Psoas muscle (tissue), 8 donors: ENCODE measurements at regions of chr7 and their contacts with region 1.

Region 1: DNA sequence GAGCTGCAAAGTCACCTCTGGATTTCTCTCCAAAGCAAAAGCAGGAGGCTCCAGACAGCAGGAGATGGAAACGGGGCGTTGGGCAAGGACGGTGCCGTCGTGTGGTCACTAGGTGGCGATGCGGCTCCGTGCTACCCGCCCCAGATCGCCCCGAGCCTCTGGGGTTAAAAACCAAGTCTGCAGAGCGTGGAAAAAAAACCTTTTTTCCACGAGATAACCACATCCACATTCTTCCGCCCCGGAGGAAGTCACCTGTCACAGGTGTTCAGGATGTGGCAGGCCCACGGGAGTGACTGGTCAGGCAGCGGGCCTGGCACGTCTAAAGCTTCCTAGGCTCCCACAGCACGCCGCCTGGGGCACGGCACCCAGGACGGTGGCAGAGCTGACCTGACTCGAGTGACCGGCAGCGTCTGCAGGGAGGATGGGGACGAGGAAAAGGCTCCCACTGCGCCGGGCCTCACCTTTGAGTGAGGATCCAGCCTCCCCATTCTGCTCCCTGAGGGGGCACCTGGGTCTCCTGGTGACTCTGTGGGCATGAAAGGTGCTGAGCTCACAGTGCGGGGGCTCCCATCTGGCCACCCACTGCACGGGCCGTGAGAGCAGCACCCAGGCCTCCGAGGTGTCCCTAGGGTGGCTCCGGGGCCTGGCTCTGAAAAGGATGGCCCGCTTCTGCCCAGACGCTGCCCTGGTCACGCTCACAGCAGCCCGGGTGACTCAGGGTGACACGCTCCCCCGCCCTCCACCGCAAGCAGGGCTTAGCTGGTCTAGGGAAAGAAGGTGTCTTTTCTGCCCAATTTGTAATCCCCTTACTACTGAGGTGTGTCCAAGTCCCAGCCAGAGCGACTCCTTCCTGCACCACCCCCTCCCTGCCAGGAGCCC is 71.3 kb upstream of the TNRC18 start:
- DNase-seq: peak; percentile 73 to 87
- ATAC-seq: peak; percentile 76 to 85 (median 80)
- H3K4me3 ChIP-seq: peak overlapping the region; percentile 37
- H3K27ac ChIP-seq: peak overlapping the region; percentile 85
- H3K4me1 ChIP-seq: peaks cover 28% of the 10 kb centered on the region
- H3K27me3 ChIP-seq: no peaks in the 10 kb centered on the region
- CTCF ChIP-seq: peak; percentile 97

Region 2: GRCh38 chr7:5559576-5559975 is 64.7 kb after region 1 on chr7:
- intact Hi-C with region 1: loop called (anchors 1 kb)
- DNase-seq: no peak
- ATAC-seq: no peak
- H3K4me3 ChIP-seq: no peak overlapping the region
- H3K27ac ChIP-seq: no peak overlapping the region
- H3K4me1 ChIP-seq: peaks cover 51% of the 10 kb centered on the region
- H3K27me3 ChIP-seq: no peaks in the 10 kb centered on the region
- CTCF ChIP-seq: no peak

Region 3: DNA sequence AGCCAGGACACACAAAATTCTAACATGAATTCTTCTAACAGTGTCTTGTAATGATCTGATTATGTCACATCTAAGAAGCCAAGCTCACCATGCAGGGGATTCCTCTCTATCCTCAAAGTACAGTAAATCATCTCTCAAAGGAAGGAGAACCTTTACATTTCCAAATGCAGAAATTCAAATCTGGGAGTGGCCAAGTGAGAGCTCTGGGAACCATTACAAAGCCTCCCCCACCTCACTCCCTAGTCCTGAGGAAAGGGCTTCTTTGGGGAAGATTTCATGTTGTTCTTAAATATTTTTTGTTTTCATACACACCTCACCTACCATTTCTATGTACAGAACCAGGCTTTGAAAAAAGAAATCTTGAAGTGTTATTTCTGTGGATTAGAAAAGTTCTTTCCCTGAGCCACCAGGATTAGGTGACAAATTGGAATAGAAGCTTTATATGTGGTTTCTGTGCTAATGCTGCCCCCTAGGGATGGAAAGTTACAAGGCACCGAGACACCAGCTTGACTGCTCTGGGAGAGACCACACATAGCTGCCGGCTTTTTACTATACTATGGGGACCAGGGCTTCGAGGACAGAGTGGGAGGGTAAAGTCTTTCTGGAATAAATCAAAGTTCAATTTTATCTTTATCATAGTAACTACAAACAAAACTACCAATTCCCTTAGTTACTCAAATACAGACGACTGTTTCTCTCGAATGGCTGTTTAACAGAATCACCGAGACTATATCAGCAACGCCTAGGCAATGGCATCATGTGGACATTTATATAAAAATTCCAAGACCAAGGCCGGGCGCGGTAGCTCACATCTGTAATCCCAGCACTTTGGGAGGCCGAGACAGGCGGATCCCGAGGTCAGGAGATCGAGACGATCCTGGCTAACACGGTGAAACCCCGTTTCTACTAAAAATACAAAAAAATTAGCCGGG is 170.4 kb after region 1 on chr7:
- intact Hi-C with region 1: loop called (anchors 1 to 5 kb)
- DNase-seq: peak; percentile 57 to 60
- ATAC-seq: peak; percentile 77 to 92 (median 82)
- H3K4me3 ChIP-seq: no peak overlapping the region
- H3K27ac ChIP-seq: no peak overlapping the region
- H3K4me1 ChIP-seq: peaks cover 12% of the 10 kb centered on the region
- H3K27me3 ChIP-seq: no peaks in the 10 kb centered on the region
- CTCF ChIP-seq: peak; percentile 83

Region 4: DNA sequence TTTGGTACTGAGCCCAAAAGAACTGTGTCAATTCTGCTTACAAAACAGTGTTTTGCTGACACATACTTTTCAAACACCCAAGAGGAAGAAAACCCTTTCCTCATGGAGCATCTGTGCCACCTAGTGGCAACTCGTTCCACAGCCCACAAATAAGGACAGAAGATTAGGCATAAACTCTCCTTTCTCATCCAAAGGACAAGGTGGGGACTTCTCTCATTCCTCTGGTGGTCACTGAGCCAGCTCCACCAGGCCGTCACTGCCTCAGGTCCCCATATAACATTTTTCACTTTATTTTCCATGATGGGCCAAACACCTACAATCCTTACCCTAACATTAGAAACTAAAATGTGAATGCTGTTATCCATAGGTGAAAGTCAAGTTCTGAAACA is 209.6 kb after region 1 on chr7:
- intact Hi-C with region 1: loop called (anchors 2 to 5 kb)
- DNase-seq: peak; percentile 74 to 77
- ATAC-seq: peak; percentile 85 to 97 (median 91)
- H3K4me3 ChIP-seq: peak overlapping the region; percentile 23
- H3K27ac ChIP-seq: peak overlapping the region; percentile 57
- H3K4me1 ChIP-seq: peaks cover 27% of the 10 kb centered on the region
- H3K27me3 ChIP-seq: no peaks in the 10 kb centered on the region
- CTCF ChIP-seq: peak; percentile 95

Region 5: DNA sequence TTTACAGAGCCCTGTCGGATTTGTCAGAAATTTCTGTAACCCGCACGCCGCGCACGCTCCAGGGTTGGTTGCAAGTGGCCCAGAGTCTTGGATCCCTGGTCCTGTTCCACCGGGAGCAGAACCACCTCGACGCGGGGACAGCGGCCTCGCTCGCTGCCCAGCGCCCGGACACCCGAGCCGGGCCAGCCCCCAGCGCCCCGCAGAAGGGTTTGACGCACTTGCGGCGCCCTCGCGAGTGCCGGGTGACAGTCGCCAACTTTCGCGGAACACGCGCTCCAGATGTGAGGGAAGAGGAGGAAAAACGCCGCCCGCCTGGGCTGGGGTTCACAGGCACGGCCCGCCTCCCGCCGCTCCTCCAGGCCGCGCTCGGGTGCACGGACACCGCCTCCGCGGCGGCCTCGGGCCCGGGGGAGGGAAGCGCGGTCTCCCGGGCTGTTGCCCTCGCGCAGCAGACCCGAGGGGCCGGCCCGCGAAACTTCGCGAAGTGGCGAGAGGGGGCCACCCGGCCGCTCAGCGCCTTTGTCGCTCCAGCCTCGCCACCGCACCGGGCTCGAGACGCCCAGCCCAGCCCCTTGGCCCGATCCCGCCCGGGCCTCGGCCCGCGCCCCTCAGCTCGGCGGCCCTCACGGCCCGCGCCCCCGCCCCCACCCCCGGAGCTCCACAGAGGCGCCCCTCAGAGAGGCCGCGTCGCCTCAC is 286.0 kb after region 1 on chr7:
- intact Hi-C with region 1: no loop called
- DNase-seq: peak; percentile 65 to 78
- ATAC-seq: peak; percentile 72 to 79 (median 76)
- H3K4me3 ChIP-seq: peak overlapping the region; percentile 94
- H3K27ac ChIP-seq: peak overlapping the region; percentile 95
- H3K4me1 ChIP-seq: peaks cover 26% of the 10 kb centered on the region
- H3K27me3 ChIP-seq: no peaks in the 10 kb centered on the region
- CTCF ChIP-seq: no peak